ENCODE measurements at regions of chr2 and their contacts with region 1.

Region 1: GRCh38 chr2:73176881-73177644 is 25.3 kb upstream of the NOTO start:
- DNase-seq: peak; percentile 92
- H3K4me3 Mint-ChIP-seq: peak overlapping the region; percentile 78
- H3K27ac Mint-ChIP-seq: peak overlapping the region; percentile 65
- H3K4me1 Mint-ChIP-seq: peaks cover 24% of the 10 kb centered on the region
- H3K27me3 Mint-ChIP-seq: peaks cover 26% of the 10 kb centered on the region

Region 2: DNA sequence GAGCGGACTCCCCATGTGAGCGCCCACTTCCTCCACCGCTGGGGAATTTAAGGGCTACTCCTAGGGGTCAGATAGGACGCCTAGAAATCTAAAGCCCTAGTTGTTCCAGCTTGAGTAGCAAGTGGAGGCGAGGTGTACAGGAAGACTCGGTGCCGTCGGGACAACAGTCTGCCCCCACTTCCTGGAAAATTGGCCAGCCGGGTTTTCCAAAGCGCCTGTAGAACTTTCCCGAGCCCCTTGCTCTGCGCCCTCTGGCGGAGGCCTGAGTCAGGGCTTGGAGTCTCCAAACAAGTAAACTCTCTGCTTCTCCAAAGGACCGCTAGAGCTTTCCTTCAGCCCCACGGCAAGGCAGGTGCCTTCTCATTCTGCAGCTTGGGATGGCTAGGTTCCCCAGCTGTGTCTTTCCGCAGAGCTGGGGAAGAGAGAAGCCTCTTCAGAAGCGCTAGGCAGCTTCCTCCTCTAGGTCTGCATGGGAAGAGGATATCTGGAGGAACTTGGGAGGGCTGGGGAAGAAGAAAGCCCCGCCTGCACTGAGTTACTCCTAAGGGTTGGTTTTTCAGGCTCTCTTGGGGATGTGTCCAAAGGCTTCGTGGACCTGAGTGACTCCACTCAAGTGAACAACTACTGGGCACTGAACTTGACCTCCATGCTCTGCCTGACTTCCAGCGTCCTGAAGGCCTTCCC is 289.2 kb before region 1 on chr2:
- CTCF ChIA-PET with region 1: interaction called, 25 read pairs
- intact Hi-C with region 1: loop called (anchors 1 kb)
- DNase-seq: peak; percentile 76
- H3K4me3 Mint-ChIP-seq: peak overlapping the region; percentile 76
- H3K27ac Mint-ChIP-seq: no peak overlapping the region
- H3K4me1 Mint-ChIP-seq: peaks cover 6% of the 10 kb centered on the region
- H3K27me3 Mint-ChIP-seq: peaks cover 63% of the 10 kb centered on the region

Region 3: DNA sequence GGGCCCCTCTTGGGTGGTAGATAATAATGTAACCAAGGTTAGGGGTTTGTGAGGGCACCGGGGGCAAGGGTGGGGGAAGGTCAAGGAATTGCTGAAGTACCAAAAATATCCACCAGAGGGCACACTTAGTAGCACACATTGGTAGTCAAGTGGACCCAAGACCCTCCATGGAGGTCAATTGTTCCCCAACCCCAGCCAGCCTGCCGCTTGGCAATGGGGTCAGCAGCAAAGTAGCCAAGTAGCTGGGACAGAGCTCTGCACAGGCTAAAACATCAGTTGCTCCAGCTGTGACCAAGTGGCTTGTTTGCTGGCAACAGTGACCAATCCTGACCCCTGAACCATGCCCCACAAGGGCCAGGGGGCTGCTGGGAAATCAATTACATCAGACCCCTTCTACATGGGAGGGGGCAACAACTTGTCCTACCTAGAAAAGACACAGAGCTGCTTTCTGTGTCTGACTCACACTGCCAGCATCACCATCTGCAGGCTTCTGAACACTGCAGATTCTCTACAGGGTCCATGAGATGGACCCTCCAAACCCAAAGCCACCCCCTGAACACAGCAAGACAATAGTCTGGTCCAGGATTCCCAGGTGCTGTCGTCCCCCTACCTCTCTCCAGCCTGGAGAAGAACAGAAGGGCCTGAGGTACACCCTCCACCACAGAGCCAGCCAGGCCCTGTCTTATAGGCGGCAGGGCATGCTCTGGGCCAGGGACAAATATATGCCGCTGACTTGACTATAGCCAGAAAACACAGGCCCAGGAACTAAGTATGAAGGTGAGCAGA is 183.7 kb before region 1 on chr2:
- CTCF ChIA-PET with region 1: interaction called, 41 read pairs
- intact Hi-C with region 1: loop called (anchors 1 kb)
- DNase-seq: peak; percentile 42
- H3K4me3 Mint-ChIP-seq: no peak overlapping the region
- H3K27ac Mint-ChIP-seq: no peak overlapping the region
- H3K4me1 Mint-ChIP-seq: no peaks in the 10 kb centered on the region
- H3K27me3 Mint-ChIP-seq: no peaks in the 10 kb centered on the region

Region 4: DNA sequence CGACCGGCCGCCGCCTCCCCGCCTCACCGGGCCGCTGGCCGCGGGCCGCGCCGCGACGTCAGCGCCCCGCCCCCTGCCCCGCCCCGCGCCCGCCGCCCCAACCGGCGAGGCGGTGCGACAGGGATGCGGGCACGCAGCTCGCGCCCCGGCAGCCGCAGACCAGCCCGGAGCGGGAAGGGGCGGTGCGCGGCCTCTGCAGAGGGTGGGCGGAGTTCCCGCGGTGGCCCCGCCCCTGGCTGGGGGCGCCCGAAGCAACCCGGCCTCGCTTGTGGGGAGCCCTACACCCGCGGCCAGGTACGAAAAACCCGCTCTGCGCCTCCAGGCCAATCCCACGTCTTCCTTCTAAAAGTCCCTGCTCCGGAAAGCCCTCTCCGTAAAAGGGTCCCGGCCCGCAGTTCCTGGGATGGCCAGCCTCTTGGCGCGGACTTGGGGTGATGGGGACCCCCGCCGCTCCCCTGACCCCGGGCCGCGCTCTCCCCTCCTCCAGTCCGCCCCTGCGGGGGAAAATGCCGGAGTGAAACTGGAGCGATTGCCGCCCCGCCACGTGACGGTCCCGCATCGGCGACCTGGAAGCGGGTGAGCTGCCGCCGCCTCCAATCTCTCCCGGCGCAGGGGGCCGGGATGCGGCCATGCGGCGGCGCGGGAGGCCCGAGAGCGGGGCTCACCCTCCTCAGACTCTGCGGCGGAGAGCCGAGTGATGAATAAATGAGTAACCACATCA is 64.0 kb before region 1 on chr2 and contains the start of gene RAB11FIP5:
- CTCF ChIA-PET with region 1: interaction called, 18 read pairs
- intact Hi-C with region 1: loop called (anchors 1 kb)
- DNase-seq: peak; percentile 78
- H3K4me3 Mint-ChIP-seq: peak within 1 kb of the TSS; percentile 81
- H3K27ac Mint-ChIP-seq: no peak within 1 kb of the TSS
- H3K4me1 Mint-ChIP-seq: peaks cover 21% of the 10 kb centered on the region
- H3K27me3 Mint-ChIP-seq: no peaks in the 10 kb centered on the region
- total RNA-seq, gene RAB11FIP5: 7.3 to 7.4 TPM

Region 5: DNA sequence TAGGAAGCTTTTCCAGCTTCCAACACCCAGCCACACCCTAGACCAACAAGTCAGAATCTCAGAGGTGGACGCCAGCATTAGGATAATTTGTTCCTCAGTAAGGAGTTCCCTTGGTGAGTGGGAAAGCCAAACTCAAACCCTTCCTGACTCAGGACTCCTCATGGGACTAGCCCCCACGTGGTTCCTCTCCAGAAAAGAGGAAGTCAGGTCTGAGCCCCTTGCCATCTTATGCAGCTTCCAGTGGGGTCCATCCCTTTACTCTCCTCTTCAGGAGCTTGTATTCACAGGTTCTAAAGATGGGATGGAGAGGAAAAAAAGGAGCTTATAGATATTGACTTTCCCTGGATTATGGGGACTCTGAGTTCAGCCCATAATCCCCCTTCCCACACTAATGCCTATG is 10.5 kb after region 1 on chr2:
- CTCF ChIA-PET with region 1: interaction called, 17 read pairs
- intact Hi-C with region 1: no loop called
- DNase-seq: no peak
- H3K4me3 Mint-ChIP-seq: no peak overlapping the region
- H3K27ac Mint-ChIP-seq: no peak overlapping the region
- H3K4me1 Mint-ChIP-seq: no peaks in the 10 kb centered on the region
- H3K27me3 Mint-ChIP-seq: peaks cover under 1% of the 10 kb centered on the region

Region 6: GRCh38 chr2:73293534-73294171 is 116.6 kb after region 1 on chr2 and contains the start of gene EGR4:
- CTCF ChIA-PET with region 1: interaction called, 8 read pairs
- intact Hi-C with region 1: loop called (anchors 2 kb)
- DNase-seq: peak; percentile 94
- H3K4me3 Mint-ChIP-seq: peak within 1 kb of the TSS; percentile 73
- H3K27ac Mint-ChIP-seq: no peak within 1 kb of the TSS
- H3K4me1 Mint-ChIP-seq: peaks cover 14% of the 10 kb centered on the region
- H3K27me3 Mint-ChIP-seq: peaks cover 65% of the 10 kb centered on the region
- total RNA-seq, gene EGR4: 0.07 to 0.12 TPM

Measured in activated naive CD4-positive, alpha-beta T cell treated with anti-CD3 and anti-CD28 coated beads for 36 hours (primary cell).